IMR-90 (cell line): ENCODE measurements at regions of chr11 and their contacts with region 1.

Region 1: GRCh38 chr11:44936525-44936924 is 14.2 kb downstream of the TP53I11 start:
- DNase-seq: peak; percentile 76
- ATAC-seq: peak; percentile 97
- H3K4me3 ChIP-seq: no peak overlapping the region
- H3K27ac ChIP-seq: no peak overlapping the region
- H3K4me1 ChIP-seq: no peaks in the 10 kb centered on the region; the same call in 1 of the 2 replicates
- H3K27me3 ChIP-seq: no peaks in the 10 kb centered on the region
- CTCF ChIP-seq: peak; percentile 95
- POLR2A ChIP-seq: 0 out of 2 replicates have a peak, but pooled peaks have one; percentile 48
- RAD21 ChIP-seq: peak; percentile 97

Region 2: DNA sequence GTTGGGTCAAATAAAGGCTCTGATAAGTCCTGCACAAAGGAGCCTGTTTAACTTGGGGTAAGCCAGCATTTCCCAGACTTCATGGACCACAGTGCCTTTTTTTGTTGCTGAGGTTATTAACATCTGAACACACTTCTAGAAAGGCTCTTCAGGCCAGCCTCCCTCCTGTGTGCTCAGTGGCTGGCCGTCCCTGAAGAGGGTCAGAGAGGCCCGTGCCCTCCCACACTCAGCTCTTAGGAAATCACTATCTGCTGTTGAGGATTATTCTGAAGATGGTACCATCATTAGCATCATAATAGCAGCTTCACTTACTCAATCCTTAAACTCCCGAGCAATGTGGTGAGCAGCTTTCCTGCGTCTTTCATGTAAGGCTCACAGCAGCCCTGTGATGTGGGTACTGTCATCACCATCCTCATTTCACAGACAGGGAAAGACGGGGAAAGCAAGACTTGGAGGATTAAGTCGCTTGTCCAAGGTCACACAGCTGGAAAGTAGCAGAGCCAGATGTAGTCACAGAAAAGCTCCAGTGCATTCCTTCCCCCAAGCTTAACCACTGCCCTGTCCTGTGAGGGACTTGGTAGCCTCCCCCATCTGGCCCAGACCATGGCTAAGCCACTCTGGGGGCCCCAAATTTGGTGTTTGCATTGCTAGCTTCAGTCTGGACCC is 138.5 kb before region 1 on chr11:
- CTCF ChIA-PET with region 1: no interaction called
- POLR2A ChIA-PET with region 1: no interaction called
- dilution Hi-C with region 1: no loop called
- in situ Hi-C with region 1: no loop called
- intact Hi-C with region 1: no loop called
- DNase-seq: peak; percentile 15
- ATAC-seq: peak; percentile 55
- H3K4me3 ChIP-seq: no peak overlapping the region
- H3K27ac ChIP-seq: no peak overlapping the region
- H3K4me1 ChIP-seq: peaks cover 5% of the 10 kb centered on the region; the same call in 1 of the 2 replicates
- H3K27me3 ChIP-seq: peaks cover 43% of the 10 kb centered on the region
- CTCF ChIP-seq: no peak
- POLR2A ChIP-seq: no peak
- RAD21 ChIP-seq: no peak

Region 3: GRCh38 chr11:44842220-44842619 is 94.3 kb before region 1 on chr11:
- CTCF ChIA-PET with region 1: no interaction called
- POLR2A ChIA-PET with region 1: no interaction called
- dilution Hi-C with region 1: no loop called
- in situ Hi-C with region 1: no loop called
- intact Hi-C with region 1: no loop called
- DNase-seq: peak; percentile 96
- ATAC-seq: peak; percentile 88
- H3K4me3 ChIP-seq: no peak overlapping the region
- H3K27ac ChIP-seq: peak overlapping the region; percentile 93
- H3K4me1 ChIP-seq: peaks cover 16% of the 10 kb centered on the region
- H3K27me3 ChIP-seq: no peaks in the 10 kb centered on the region
- CTCF ChIP-seq: no peak
- POLR2A ChIP-seq: no peak
- RAD21 ChIP-seq: peak; percentile 24

Region 4: DNA sequence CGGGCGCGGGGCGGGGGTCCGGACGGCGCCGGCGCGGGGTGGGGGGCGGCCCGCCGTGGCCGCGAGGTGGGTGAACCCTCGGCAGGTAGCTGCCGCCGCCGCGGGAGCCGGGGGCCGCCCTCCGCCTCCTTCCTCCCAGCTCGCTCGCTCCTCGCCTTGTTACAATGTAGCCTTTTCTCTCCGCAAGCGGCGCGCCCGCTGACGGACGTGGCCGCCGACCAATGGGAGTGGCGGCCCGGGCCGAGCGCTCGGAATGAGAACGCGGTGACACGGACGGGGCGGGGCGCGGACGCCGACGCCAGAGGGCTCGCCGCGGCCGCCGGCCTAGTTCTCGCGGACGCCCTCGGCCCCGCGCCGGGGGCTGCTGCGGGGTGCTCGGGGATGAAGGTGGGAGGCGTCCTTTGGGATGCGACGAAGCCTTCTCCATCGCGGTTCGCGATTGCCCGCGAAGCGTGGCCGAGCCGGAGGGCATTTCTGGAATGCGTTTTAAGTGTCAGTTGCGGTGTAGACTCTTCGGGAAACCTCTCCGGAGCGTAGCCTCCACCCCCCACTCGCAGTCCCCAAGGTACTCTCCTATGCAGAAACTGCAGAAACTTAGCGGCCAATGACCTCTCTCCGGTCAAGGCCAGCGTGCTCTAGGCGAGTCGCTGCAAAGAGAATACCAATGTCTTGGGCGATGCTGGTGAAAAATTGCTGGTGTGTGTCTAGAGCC is 210.6 kb after region 1 on chr11:
- CTCF ChIA-PET with region 1: no interaction called
- POLR2A ChIA-PET with region 1: no interaction called
- dilution Hi-C with region 1: no loop called
- in situ Hi-C with region 1: no loop called
- intact Hi-C with region 1: loop called (anchors 2 kb)
- DNase-seq: peak; percentile 94
- ATAC-seq: peak; percentile 96
- H3K4me3 ChIP-seq: peak overlapping the region; percentile 90
- H3K27ac ChIP-seq: peak overlapping the region; percentile 77
- H3K4me1 ChIP-seq: peaks cover 2% of the 10 kb centered on the region; the same call in 1 of the 2 replicates
- H3K27me3 ChIP-seq: peaks cover 3% of the 10 kb centered on the region
- CTCF ChIP-seq: no peak
- POLR2A ChIP-seq: peak; percentile 82; the same call in 1 of the 2 replicates
- RAD21 ChIP-seq: no peak

Region 5: DNA sequence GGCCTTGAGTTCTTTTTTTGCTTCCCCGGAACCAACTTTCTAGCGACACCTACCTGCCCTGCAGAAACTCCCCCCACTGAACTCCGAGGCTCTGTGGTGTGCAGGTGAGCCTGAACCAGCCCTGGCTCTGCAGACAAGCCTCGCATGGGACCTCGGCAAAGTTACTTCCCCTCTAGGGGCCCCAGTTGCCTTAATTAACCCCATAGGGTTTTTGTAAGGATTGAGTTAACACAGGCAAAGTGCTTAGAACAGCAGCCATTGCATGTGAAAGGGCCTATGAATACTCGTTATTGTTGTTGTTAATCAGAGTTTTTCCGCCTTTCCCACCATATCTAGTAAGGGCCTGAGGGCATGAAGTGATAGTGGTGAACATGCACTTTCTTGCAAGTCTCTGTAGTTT is 362.2 kb after region 1 on chr11:
- CTCF ChIA-PET with region 1: no interaction called
- POLR2A ChIA-PET with region 1: no interaction called
- dilution Hi-C with region 1: no loop called
- in situ Hi-C with region 1: loop called (anchors 10 kb)
- intact Hi-C with region 1: loop called (anchors 2 kb)
- DNase-seq: no peak
- ATAC-seq: no peak
- H3K4me3 ChIP-seq: no peak overlapping the region
- H3K27ac ChIP-seq: no peak overlapping the region
- H3K4me1 ChIP-seq: no peaks in the 10 kb centered on the region
- H3K27me3 ChIP-seq: peaks cover 15% of the 10 kb centered on the region
- CTCF ChIP-seq: no peak
- POLR2A ChIP-seq: no peak
- RAD21 ChIP-seq: no peak